Endothelial cell of umbilical vein (primary cell): ENCODE measurements at regions of chr6 and their contacts with region 1.

Region 1: DNA sequence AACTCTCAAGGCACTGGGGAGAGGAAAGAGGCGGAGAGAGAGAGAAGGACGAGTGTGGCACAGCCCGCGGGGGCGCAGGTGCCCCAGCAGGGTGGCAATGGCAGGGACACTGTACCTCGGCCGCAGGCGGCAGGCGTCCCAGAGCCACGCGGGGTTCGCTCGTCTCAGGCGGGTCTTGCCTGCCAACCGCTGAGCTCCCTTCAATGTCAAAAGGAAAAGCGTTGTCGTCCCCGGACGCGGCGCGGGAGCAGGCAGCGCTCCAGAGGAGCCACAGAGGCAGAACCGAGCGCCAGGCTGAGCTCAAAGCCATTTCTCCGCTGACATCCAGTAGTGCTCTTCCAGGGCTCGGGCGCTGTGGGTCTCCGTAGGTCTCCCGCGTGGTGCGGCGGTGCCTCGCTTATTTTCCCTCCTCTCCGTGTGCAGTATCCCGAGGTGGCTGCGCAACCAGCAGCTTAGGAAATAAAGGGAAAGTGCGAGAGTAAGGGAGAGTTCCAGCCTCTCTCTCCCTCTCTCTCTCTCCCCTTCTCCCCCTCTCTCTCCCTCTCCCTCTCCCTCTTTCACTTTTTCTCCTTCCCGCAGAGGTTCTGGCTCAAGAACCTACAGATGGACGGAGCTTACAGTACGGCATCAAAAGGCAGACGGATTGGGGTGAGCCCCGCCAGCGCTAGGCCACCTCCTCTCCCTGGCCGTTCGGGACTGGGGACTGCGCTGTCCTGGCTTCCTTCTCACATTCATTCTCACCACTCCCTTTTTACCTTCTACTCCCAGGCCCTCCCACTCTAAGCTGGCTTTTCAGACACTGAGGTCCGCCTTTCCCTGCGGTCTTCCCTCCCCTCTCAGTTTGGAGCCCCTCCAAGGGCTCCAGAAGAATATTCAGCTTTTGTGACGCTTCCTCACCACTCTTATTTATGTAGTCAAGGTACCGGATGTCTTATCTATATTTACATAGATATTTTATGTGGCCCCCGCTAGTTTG is at the start of gene LAMA4:
- DNase-seq: peak; percentile 86
- H3K4me3 ChIP-seq: peak within 1 kb of the TSS; percentile 91 to 94 (median 94)
- H3K27ac ChIP-seq: peak within 1 kb of the TSS; percentile 81
- H3K4me1 ChIP-seq: peaks cover 31% of the 10 kb centered on the region
- H3K27me3 ChIP-seq: no peaks in the 10 kb centered on the region
- CTCF ChIP-seq: no peak
- POLR2A ChIP-seq: peak; percentile 98
- total RNA-seq, gene LAMA4: 629 TPM in 2 replicates

Region 2: GRCh38 chr6:111912904-111913303 is 341.2 kb before region 1 on chr6:
- CTCF ChIA-PET with region 1: no interaction called
- POLR2A ChIA-PET with region 1: no interaction called
- dilution Hi-C with region 1: no loop called
- intact Hi-C with region 1: no loop called
- DNase-seq: no peak
- H3K4me3 ChIP-seq: no peak overlapping the region
- H3K27ac ChIP-seq: no peak overlapping the region
- H3K4me1 ChIP-seq: no peaks in the 10 kb centered on the region
- H3K27me3 ChIP-seq: no peaks in the 10 kb centered on the region
- CTCF ChIP-seq: no peak
- POLR2A ChIP-seq: no peak

Region 3: GRCh38 chr6:112203577-112204349 is 50.4 kb before region 1 on chr6:
- CTCF ChIA-PET with region 1: interaction called, 14 read pairs
- POLR2A ChIA-PET with region 1: interaction called, 3 read pairs
- dilution Hi-C with region 1: no loop called
- intact Hi-C with region 1: loop called (anchors 1 kb)
- DNase-seq: peak; percentile 94
- H3K4me3 ChIP-seq: no peak overlapping the region
- H3K27ac ChIP-seq: peak overlapping the region; percentile 87
- H3K4me1 ChIP-seq: peaks cover 77% of the 10 kb centered on the region
- H3K27me3 ChIP-seq: no peaks in the 10 kb centered on the region
- CTCF ChIP-seq: no peak
- POLR2A ChIP-seq: no peak

Region 4: GRCh38 chr6:112216699-112217551 is 37.2 kb before region 1 on chr6:
- CTCF ChIA-PET with region 1: no interaction called
- POLR2A ChIA-PET with region 1: interaction called, 9 read pairs
- dilution Hi-C with region 1: no loop called
- intact Hi-C with region 1: loop called (anchors 1 kb)
- DNase-seq: peak; percentile 96
- H3K4me3 ChIP-seq: no peak overlapping the region
- H3K27ac ChIP-seq: peak overlapping the region; percentile 96
- H3K4me1 ChIP-seq: peaks cover 81% of the 10 kb centered on the region
- H3K27me3 ChIP-seq: no peaks in the 10 kb centered on the region
- CTCF ChIP-seq: no peak
- POLR2A ChIP-seq: peak; percentile 93

Region 5: GRCh38 chr6:112237595-112237994 is 16.5 kb before region 1 on chr6:
- CTCF ChIA-PET with region 1: interaction called, 8 read pairs
- POLR2A ChIA-PET with region 1: interaction called, 23 read pairs
- dilution Hi-C with region 1: no loop called
- intact Hi-C with region 1: loop called (anchors 1 kb)
- DNase-seq: peak; percentile 53
- H3K4me3 ChIP-seq: no peak overlapping the region
- H3K27ac ChIP-seq: peak overlapping the region; percentile 99
- H3K4me1 ChIP-seq: peaks cover 86% of the 10 kb centered on the region
- H3K27me3 ChIP-seq: no peaks in the 10 kb centered on the region
- CTCF ChIP-seq: no peak
- POLR2A ChIP-seq: no peak

Region 6: GRCh38 chr6:112269114-112269513 is 15.0 kb after region 1 on chr6:
- CTCF ChIA-PET with region 1: interaction called, 54 read pairs
- POLR2A ChIA-PET with region 1: interaction called, 12 read pairs
- dilution Hi-C with region 1: no loop called
- intact Hi-C with region 1: loop called (anchors 1 kb)
- DNase-seq: peak; percentile 81
- H3K4me3 ChIP-seq: no peak overlapping the region
- H3K27ac ChIP-seq: no peak overlapping the region
- H3K4me1 ChIP-seq: peaks cover 19% of the 10 kb centered on the region
- H3K27me3 ChIP-seq: peaks cover 0 to 2% of the 10 kb centered on the region in 2 experiments
- CTCF ChIP-seq: peak; percentile 41 to 48
- POLR2A ChIP-seq: no peak

Region 7: GRCh38 chr6:112311950-112312547 is 57.9 kb after region 1 on chr6:
- CTCF ChIA-PET with region 1: interaction called, 18 read pairs
- POLR2A ChIA-PET with region 1: no interaction called
- dilution Hi-C with region 1: no loop called
- intact Hi-C with region 1: loop called (anchors 1 kb)
- DNase-seq: peak; percentile 51
- H3K4me3 ChIP-seq: no peak overlapping the region
- H3K27ac ChIP-seq: no peak overlapping the region
- H3K4me1 ChIP-seq: no peaks in the 10 kb centered on the region
- H3K27me3 ChIP-seq: no peaks in the 10 kb centered on the region
- CTCF ChIP-seq: peak; percentile 37 to 43
- POLR2A ChIP-seq: no peak

Region 8: GRCh38 chr6:112372226-112372806 is 118.2 kb after region 1 on chr6:
- CTCF ChIA-PET with region 1: no interaction called
- POLR2A ChIA-PET with region 1: no interaction called
- dilution Hi-C with region 1: no loop called
- intact Hi-C with region 1: loop called (anchors 5 kb)
- DNase-seq: peak; percentile 49
- H3K4me3 ChIP-seq: no peak overlapping the region
- H3K27ac ChIP-seq: no peak overlapping the region
- H3K4me1 ChIP-seq: no peaks in the 10 kb centered on the region
- H3K27me3 ChIP-seq: peaks cover 22 to 23% of the 10 kb centered on the region in 2 experiments
- CTCF ChIP-seq: peak; percentile 32 to 36
- POLR2A ChIP-seq: no peak